Naive thymus-derived CD4-positive, alpha-beta T cell (primary cell): ENCODE measurements at regions of chr5 and their contacts with region 1.

Region 1: GRCh38 chr5:80153586-80154126 is 102.2 kb downstream of the SERINC5 start:
- DNase-seq: peak in 7 of 9 donors; percentile 57 to 78 (median 69)
- ATAC-seq: peak; percentile 60
- H3K4me3 ChIP-seq: no peak overlapping the region
- H3K4me3 Mint-ChIP-seq: peak overlapping the region; percentile 48 to 88 (median 80)
- H3K27ac ChIP-seq: peak overlapping the region; percentile 78
- H3K27ac Mint-ChIP-seq: peak overlapping the region; percentile 85 to 100 (median 99)
- H3K4me1 ChIP-seq: peaks cover 9 to 49% of the 10 kb centered on the region in 2 donors
- H3K4me1 Mint-ChIP-seq: peaks cover 17 to 89% (median 72%) of the 10 kb centered on the region in 7 donors
- H3K27me3 ChIP-seq: no peaks in the 10 kb centered on the region
- H3K27me3 Mint-ChIP-seq: no peaks in the 10 kb centered on the region

Region 2: DNA sequence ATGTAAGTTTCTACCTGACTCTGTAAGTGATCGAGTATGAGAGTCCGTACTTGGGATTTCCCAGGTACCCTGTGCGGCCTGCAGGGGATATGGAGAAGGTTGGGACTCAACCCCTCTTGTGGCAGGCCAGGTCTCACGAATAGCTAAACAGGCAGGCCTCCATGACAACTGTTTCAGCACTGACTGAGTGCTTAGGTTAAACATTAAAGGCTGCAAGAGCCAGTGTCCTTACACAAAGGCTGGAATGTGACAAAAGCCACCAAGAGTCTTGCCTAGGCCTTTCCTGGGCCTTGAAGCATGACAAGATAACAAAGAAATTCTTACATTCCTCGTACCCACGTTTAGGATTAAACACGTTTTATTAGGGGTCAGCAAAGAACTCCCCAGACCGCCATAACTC is 59.9 kb before region 1 on chr5:
- CTCF ChIA-PET with region 1: interaction called, 5 read pairs
- POLR2A ChIA-PET with region 1: interaction called, 4 read pairs
- intact Hi-C with region 1: loop called in 1 of 2 experiments (anchors 2 kb)
- DNase-seq: no peak
- ATAC-seq: no peak
- H3K4me3 ChIP-seq: no peak overlapping the region
- H3K4me3 Mint-ChIP-seq: peak overlapping the region in 2 of 10 donors; percentile 3 to 5
- H3K27ac ChIP-seq: no peak overlapping the region
- H3K27ac Mint-ChIP-seq: peak overlapping the region in 3 of 9 donors; percentile 9 to 62 (median 54)
- H3K4me1 ChIP-seq: peaks cover 0 to 18% of the 10 kb centered on the region in 2 donors
- H3K4me1 Mint-ChIP-seq: peaks cover 15 to 53% (median 47%) of the 10 kb centered on the region in 7 donors
- H3K27me3 ChIP-seq: no peaks in the 10 kb centered on the region
- H3K27me3 Mint-ChIP-seq: peaks cover 0 to 4% (median 0%) of the 10 kb centered on the region in 5 donors

Region 3: GRCh38 chr5:80165452-80165851 is 11.8 kb after region 1 on chr5:
- CTCF ChIA-PET with region 1: interaction called, 3 read pairs
- POLR2A ChIA-PET with region 1: interaction called, 17 read pairs
- intact Hi-C with region 1: loop called in 1 of 2 experiments (anchors 1 kb)
- DNase-seq: no peak
- ATAC-seq: no peak
- H3K4me3 ChIP-seq: no peak overlapping the region
- H3K4me3 Mint-ChIP-seq: peak overlapping the region in 4 of 10 donors; percentile 8 to 38 (median 14)
- H3K27ac ChIP-seq: peak overlapping the region; percentile 42
- H3K27ac Mint-ChIP-seq: peak overlapping the region in 8 of 9 donors; percentile 55 to 93 (median 76)
- H3K4me1 ChIP-seq: peaks cover 6 to 24% of the 10 kb centered on the region in 2 donors
- H3K4me1 Mint-ChIP-seq: peaks cover 17 to 90% (median 62%) of the 10 kb centered on the region in 7 donors
- H3K27me3 ChIP-seq: no peaks in the 10 kb centered on the region
- H3K27me3 Mint-ChIP-seq: no peaks in the 10 kb centered on the region

Region 4: DNA sequence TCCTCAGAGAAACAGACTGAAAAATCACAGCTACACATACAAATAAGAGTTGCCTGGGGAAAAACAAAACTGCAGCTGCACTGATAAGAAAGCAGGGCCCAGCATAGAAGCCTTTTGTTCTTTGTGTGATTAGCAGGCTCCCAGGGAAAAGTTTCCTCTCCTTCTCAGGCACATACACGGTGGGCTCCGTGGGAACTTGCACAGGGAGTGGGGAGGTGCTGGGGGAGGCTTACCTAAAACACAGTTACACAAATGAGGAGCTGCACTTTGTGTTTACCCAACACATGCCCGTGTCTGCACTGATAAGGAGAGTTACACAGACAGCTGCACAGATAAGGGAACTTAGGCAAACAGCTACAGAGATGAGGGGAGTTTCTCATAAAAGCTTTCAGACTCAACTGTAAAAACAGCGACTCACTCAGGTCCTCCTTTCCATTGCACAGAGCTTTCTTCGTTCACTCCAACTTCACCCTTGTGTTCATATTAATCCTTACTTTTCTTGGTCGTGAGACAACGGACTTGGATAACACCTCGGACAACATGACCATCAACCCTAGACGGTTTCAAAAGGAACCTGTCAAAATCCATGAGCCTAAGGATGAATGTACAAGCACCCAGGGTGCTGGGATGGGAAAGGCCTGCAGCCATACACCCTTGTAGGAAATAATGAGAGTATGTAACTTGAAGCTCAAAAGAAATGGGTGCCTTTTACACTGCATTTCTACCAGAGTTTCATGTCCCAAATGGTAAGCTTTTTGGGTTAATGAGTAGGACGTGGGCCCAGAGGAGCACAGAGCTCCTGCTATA is 51.4 kb after region 1 on chr5:
- CTCF ChIA-PET with region 1: interaction called, 13 read pairs
- POLR2A ChIA-PET with region 1: interaction called, 5 read pairs
- intact Hi-C with region 1: no loop called
- DNase-seq: peak in 6 of 9 donors; percentile 44 to 59 (median 49)
- ATAC-seq: peak; percentile 88
- H3K4me3 ChIP-seq: no peak overlapping the region
- H3K4me3 Mint-ChIP-seq: peak overlapping the region in 9 of 10 donors; percentile 58 to 82 (median 73)
- H3K27ac ChIP-seq: peak overlapping the region; percentile 54
- H3K27ac Mint-ChIP-seq: peak overlapping the region; percentile 46 to 99 (median 90)
- H3K4me1 ChIP-seq: peaks cover 10 to 74% of the 10 kb centered on the region in 2 donors
- H3K4me1 Mint-ChIP-seq: peaks cover 45 to 99% (median 91%) of the 10 kb centered on the region in 7 donors
- H3K27me3 ChIP-seq: no peaks in the 10 kb centered on the region
- H3K27me3 Mint-ChIP-seq: no peaks in the 10 kb centered on the region

Region 5: DNA sequence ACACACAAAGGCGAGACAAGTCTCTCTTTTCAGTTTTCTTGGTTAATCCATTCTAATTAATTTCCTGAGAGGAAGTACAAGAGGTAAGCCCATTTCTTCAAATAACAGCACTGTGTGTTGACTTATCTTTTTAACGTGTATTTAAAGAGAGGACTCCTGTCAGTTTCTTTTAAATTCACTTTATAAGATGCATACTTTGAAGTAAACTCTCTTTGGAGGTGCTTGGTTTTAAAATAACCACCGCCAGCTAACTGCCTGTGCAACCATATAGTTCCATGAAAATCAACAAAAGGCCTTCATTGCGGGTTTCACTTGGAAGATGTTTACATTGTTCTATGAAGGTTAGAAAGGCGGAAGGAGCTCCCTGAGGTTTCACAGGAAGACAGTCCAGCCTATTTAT is 115.3 kb after region 1 on chr5:
- CTCF ChIA-PET with region 1: no interaction called
- POLR2A ChIA-PET with region 1: interaction called, 4 read pairs
- intact Hi-C with region 1: loop called in 1 of 2 experiments (anchors 1 kb)
- DNase-seq: peak in 3 of 9 donors; percentile 19 to 42 (median 32)
- ATAC-seq: peak; percentile 20
- H3K4me3 ChIP-seq: no peak overlapping the region
- H3K4me3 Mint-ChIP-seq: peak overlapping the region; percentile 56 to 83 (median 78)
- H3K27ac ChIP-seq: peak overlapping the region; percentile 58
- H3K27ac Mint-ChIP-seq: peak overlapping the region; percentile 93 to 100 (median 96)
- H3K4me1 ChIP-seq: peaks cover 6 to 37% of the 10 kb centered on the region in 2 donors
- H3K4me1 Mint-ChIP-seq: peaks cover 39 to 79% (median 62%) of the 10 kb centered on the region in 7 donors
- H3K27me3 ChIP-seq: no peaks in the 10 kb centered on the region
- H3K27me3 Mint-ChIP-seq: no peaks in the 10 kb centered on the region